GM18951 (cell line): ENCODE measurements at regions of chr5 and their contacts with region 1.

Region 1: GRCh38 chr5:175696139-175696854 is 38.4 kb downstream of the HRH2 start:
- POLR2A ChIP-seq: no peak

Region 2: GRCh38 chr5:175534070-175534932 is 162.0 kb before region 1 on chr5:
- in situ Hi-C with region 1: loop called (anchors 10 kb)
- POLR2A ChIP-seq: no peak